ENCODE measurements at regions of chr19 and their contacts with region 1.

Region 1: DNA sequence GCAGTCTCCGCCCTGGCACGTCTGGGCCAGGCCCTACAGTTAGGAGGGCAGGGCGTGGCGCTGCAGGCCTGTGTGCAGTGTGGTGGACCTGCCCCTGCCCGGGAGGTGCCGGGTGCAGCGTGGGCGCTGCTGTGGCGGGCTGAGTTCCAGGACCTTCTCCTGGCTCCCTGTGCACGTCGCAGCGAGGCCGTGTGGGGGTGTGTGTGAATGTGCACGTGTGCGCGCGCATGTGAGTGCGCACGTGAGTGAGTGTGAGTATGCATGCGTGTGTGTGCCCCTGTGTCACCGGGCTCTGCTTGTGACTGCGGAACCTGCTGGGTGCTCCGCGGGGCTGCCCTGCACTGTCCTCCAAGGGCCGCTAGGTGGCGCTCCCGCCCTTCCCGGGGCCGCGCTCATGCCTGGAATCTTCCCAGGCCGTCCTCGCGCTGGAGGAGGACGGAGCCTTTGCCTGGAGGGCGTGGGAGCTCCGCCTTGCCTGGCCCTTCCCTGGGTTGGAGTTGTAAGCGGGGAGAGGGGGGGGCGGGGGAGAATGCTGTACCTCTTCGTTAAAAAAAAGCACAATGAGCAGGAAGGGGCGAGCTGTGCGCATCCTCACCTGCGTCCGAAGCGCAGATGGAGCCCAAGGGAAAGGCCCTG is 79.3 kb downstream of the KDM4B start:
- DNase-seq: peak; percentile 68 to 78
- ATAC-seq: peak; percentile 77 to 93 (median 89)
- H3K4me3 ChIP-seq: no peak overlapping the region
- H3K27ac ChIP-seq: no peak overlapping the region
- H3K4me1 ChIP-seq: peaks cover 14 to 53% (median 31%) of the 10 kb centered on the region in 9 donors
- H3K27me3 ChIP-seq: no peaks in the 10 kb centered on the region
- CTCF ChIP-seq: peak; percentile 90 to 98 (median 96)

Region 2: DNA sequence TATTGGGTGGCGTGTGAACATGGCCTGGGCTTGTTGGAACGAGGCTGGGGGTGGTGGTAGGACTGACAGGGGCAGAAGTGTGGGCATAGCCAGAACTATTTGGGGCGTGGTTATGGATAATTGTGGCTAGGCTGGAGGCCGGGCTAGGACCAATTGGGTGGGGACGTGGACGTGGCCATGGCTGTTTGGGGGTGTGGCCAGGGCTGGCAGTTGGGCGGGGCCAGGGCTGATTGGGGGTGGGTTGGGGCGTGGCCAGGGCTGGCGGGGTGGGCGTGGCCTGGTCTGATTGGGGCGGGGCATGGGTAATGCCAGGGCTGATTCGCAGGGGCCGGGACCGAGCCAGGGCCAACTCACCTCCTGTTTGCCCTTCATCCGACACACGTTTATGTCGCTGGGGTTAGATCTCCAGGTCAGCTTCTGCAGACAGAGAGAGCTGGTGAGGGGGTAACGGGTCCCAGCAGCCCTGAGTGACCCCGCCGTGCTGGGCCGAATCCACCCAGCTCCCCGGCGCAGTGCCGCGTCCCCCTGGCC is 491.5 kb before region 1 on chr19:
- intact Hi-C with region 1: no loop called
- DNase-seq: no peak
- ATAC-seq: peak in 7 of 8 donors; percentile 15 to 66 (median 46)
- H3K4me3 ChIP-seq: no peak overlapping the region
- H3K27ac ChIP-seq: no peak overlapping the region
- H3K4me1 ChIP-seq: peaks cover 0 to 28% (median 11%) of the 10 kb centered on the region in 9 donors
- H3K27me3 ChIP-seq: no peaks in the 10 kb centered on the region
- CTCF ChIP-seq: no peak

Region 3: GRCh38 chr19:5112681-5113557 is 64.7 kb after region 1 on chr19:
- intact Hi-C with region 1: no loop called
- DNase-seq: no peak
- ATAC-seq: no peak
- H3K4me3 ChIP-seq: no peak overlapping the region
- H3K27ac ChIP-seq: no peak overlapping the region
- H3K4me1 ChIP-seq: peaks cover 0 to 28% (median 13%) of the 10 kb centered on the region in 9 donors
- H3K27me3 ChIP-seq: no peaks in the 10 kb centered on the region
- CTCF ChIP-seq: no peak

Region 4: DNA sequence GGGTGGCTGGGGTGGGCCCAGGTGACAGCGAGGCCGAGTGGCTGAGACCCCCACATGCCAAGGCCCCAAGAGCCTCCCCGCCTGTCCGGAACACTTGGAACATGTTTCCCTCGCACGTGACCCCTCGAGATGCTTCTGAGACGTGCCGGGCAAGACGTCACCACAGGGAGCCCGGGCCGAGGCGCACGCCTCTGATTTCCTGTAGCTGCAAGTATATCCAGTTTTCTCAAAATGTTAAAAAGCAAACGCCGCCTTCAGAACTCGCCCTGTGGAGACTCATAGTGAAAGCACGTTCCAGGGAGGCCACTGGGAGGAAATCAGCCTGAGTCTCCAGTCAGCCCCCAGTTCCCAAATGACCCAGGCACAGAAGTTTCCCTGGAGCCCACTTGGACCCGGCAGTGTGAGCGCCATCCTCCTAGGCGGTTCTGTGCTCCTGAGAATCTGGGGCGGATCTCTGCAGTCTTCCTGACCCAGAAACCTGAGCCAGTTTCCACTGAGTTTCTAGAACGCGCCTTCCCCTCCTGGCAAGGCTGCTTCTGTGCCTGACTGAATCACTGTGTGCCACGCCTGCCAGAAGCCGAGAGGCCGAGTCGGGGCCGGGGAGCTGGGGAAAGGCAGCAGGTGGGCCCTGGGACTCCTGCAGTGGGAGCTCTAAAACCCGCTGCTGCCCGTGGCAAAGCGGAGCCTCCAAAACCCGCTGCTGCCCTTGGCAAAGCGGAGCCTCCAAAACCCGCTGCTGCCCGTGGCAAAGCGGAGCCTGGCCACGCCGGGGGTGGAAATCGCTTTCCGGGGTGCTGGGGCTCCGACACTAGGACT is 100.0 kb after region 1 on chr19:
- intact Hi-C with region 1: loop called in 4 of 10 experiments (anchors 5 to 10 kb)
- DNase-seq: peak in 1 of 2 donors; percentile 25
- ATAC-seq: no peak
- H3K4me3 ChIP-seq: no peak overlapping the region
- H3K27ac ChIP-seq: no peak overlapping the region
- H3K4me1 ChIP-seq: no peaks in the 10 kb centered on the region
- H3K27me3 ChIP-seq: no peaks in the 10 kb centered on the region
- CTCF ChIP-seq: no peak

Region 5: GRCh38 chr19:5369962-5370367 is 321.8 kb after region 1 on chr19:
- intact Hi-C with region 1: loop called in 1 of 10 experiments (anchors 10 kb)
- DNase-seq: peak in 1 of 2 donors; percentile 41
- ATAC-seq: no peak
- H3K4me3 ChIP-seq: no peak overlapping the region
- H3K27ac ChIP-seq: no peak overlapping the region
- H3K4me1 ChIP-seq: no peaks in the 10 kb centered on the region
- H3K27me3 ChIP-seq: peaks cover 0 to 54% (median 21%) of the 10 kb centered on the region in 7 donors
- CTCF ChIP-seq: peak in 7 of 9 donors; percentile 21 to 51 (median 34)

Region 6: GRCh38 chr19:5577785-5578493 is 529.7 kb after region 1 on chr19:
- intact Hi-C with region 1: loop called (anchors 5 to 10 kb)
- DNase-seq: peak; percentile 50 to 69
- ATAC-seq: peak; percentile 71 to 88 (median 80)
- H3K4me3 ChIP-seq: no peak overlapping the region
- H3K27ac ChIP-seq: no peak overlapping the region
- H3K4me1 ChIP-seq: peaks cover 0 to 4% (median 0%) of the 10 kb centered on the region in 9 donors
- H3K27me3 ChIP-seq: no peaks in the 10 kb centered on the region
- CTCF ChIP-seq: peak; percentile 95 to 100 (median 99)